ENCODE measurements at regions of chr10 and their contacts with region 1.

Region 1: DNA sequence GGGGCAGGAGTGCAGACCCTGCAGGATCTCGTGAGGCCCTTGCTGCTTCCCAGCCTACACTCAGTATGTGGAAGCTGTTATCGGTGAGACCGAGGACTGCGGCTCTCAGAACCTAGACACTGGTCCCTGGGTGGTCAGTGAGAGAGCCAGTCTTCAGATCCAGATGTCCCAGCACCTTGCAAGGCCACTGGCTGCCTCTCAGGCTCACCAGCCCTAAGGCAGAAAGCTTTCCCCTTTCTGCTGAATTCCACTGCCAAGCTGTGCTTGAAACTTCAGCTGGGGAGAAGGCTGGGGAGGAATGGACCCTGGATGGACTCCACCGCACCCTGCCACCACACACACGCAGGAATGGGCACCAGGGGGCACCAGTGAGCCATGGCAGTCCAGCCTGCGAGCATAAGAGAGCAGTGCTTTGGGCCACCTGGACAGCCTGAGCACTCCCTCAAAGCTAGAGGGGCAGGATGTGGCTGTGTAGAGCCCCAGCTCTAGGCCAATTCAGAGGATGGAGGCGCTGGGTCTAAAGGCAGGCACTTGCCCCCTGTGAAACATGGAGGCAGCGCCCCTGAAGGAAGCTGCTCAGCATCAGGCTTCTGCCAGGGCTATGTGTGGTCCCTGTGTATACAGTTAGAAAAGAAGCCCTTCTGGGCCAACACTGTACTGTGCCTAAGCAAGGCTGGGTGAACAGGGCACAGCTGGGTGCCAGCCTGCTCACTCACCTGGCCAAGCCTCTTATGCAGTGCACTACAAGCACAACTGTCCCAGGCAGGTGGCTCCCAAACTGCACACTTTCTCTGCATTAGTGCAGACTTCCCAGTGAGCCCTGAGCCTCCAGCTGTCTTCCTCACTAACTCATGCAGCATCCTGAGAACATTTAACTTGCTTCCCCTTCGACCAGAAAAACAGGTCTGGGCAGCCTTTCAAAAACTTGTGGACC is 21.6 kb downstream of the TMEM72 start:
- DNase-seq: peak; percentile 80 to 97 (median 92)

Region 2: GRCh38 chr10:44370731-44371248 is 562.0 kb before region 1 on chr10:
- intact Hi-C with region 1: no loop called
- DNase-seq: no peak

Region 3: DNA sequence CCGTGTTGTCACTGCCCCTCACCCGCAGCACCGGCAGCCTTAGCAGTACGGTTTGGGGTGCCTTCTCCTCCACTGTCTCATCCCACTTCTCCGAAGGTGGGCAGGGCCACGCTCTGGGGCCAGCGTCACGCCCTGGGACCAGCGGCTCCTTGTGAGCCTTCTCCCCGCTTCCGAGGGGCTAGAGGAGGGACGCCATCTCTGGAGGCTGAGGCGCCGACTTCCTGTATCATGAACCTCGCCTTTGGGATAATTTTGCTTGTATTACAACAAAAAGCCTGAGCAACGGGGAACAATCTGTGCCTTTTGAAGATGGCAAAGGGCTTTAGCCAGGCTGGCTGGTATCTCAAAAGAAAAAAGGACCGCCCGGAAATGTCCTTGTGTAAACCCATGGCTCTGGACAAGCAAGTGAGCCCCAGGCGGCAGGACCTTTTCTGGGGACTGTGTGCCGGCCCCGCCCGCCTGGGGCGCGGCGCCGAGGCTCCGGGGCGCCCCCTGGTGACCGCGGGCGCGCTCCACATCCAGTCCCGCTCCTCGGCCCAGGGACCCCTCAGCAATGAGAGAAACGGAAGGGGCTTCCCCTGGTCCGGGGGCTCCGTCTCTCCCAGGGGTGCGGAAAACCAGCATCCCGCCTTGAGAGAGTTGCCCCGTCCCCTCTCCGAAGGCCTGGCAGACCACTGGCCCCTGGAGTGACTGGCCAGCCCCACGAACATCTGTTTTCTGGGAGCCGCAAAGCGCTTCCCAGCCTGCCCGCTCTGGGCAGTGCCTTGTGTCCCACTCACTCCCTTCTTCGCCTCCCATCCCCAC is 42.0 kb after region 1 on chr10:
- intact Hi-C with region 1: loop called (anchors 5 kb)
- DNase-seq: peak in 41 of 42 donors; percentile 52 to 88 (median 75)